AG04450 (cell line): ENCODE measurements at regions of chr11 and their contacts with region 1.

Region 1: DNA sequence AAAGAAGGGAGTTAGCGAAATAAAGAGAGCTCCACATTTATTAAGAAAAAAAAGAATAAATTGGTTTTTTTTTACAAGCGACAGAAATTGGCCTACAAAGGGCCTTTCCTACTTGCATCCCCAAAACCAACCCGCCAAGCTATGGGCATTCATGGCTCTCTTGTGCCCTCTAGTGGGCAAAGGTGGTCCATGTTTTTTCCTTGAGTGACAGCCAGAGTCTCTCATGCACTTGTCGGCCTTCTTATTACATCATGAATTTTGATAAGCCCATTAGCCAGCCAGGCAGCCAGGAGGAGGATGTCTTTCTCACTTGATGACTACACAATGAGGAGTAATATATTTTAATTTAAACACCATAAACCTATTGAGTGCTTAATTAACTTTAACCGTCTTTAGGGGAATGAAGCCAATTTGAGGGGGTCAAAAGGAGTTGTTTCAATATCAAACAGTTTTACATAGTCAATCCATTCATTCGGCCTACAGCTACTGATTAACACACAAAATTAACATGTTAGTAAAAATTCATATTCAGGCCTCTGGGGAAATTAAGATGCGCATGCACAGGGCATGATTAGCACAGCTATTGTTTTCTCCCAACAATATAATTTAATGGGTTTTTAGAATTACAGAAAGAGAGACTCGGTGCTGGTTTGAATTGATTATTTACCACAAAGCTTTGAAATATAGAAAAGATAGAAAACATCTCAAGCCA is 85.5 kb downstream of the RCN1 start:
- DNase-seq: peak; percentile 48
- H3K4me3 ChIP-seq: no peak overlapping the region
- H3K27ac ChIP-seq: no peak overlapping the region
- H3K27me3 ChIP-seq: peaks cover 9% of the 10 kb centered on the region
- CTCF ChIP-seq: peak; percentile 94

Region 2: DNA sequence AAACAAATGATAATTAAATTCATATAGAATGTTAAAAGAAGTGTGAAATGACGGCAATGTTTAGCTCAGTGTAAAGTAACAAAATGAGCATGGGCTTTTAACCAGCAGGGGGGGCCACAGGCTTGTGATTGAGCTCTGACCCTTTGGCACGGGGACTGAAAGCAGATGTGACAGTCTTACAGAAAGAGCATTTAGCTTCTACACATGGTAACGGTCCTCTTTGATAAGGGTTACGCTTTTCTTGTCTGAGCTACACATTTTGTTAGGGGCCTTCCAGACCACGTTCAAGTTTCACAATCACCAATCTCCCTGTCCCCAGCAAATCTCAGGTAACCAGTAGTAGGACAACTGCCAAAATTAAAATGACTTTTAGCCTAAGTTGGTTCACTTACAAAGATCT is 1069.3 kb before region 1 on chr11:
- CTCF ChIA-PET with region 1: interaction called, 16 read pairs
- POLR2A ChIA-PET with region 1: no interaction called
- DNase-seq: no peak
- H3K4me3 ChIP-seq: no peak overlapping the region
- H3K27ac ChIP-seq: no peak overlapping the region
- H3K27me3 ChIP-seq: no peaks in the 10 kb centered on the region
- CTCF ChIP-seq: peak; percentile 46

Region 3: GRCh38 chr11:31397239-31397834 is 779.0 kb before region 1 on chr11:
- CTCF ChIA-PET with region 1: interaction called, 12 read pairs
- POLR2A ChIA-PET with region 1: no interaction called
- DNase-seq: no peak
- H3K4me3 ChIP-seq: no peak overlapping the region
- H3K27ac ChIP-seq: no peak overlapping the region
- H3K27me3 ChIP-seq: no peaks in the 10 kb centered on the region
- CTCF ChIP-seq: peak; percentile 67

Region 4: DNA sequence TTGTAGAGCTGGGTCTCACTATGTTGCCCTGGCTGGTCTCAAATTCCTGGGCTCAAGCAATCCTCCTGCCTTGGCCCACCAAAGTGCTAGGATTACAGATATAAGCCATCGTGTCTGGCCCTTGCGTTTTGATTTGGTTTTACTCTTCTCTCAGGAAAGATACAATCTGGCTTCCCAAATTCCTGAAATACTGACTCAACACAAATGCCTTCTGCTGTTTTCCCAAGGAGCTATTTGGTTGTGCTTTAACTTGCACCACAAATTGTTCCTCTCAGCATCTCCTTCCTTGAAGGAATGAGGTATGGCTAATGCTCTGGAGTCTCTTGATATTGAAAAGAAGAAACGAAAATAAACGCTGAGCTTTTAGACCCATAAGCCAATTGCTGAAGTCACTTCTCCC is 255.3 kb before region 1 on chr11:
- CTCF ChIA-PET with region 1: no interaction called
- POLR2A ChIA-PET with region 1: no interaction called
- DNase-seq: no peak
- H3K4me3 ChIP-seq: no peak overlapping the region
- H3K27ac ChIP-seq: no peak overlapping the region
- H3K27me3 ChIP-seq: peaks cover 2% of the 10 kb centered on the region
- CTCF ChIP-seq: no peak

Region 5: GRCh38 chr11:32006799-32007388 is 169.5 kb before region 1 on chr11:
- CTCF ChIA-PET with region 1: interaction called, 27 read pairs
- POLR2A ChIA-PET with region 1: no interaction called
- DNase-seq: peak; percentile 6
- H3K4me3 ChIP-seq: no peak overlapping the region
- H3K27ac ChIP-seq: no peak overlapping the region
- H3K27me3 ChIP-seq: peaks cover 19% of the 10 kb centered on the region
- CTCF ChIP-seq: peak; percentile 73

Region 6: DNA sequence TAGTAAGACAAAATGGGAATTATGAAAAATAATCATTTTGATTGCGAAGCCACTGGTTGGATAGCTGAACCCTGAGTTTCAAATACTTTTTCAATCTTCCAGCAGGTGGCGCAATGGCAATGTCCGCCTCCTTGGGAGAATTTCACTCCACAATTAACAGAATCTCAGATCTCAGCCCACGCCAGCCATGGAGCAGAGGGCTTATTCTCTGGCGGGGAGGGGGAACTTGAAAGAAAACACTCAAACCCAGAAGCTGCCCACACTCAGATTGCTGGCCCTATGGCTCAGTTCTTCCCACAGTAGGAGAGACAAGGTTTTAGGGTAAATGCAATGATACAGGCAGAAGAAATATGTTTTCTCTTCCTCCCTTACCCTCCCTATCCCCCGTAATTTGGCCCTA is 124.2 kb before region 1 on chr11:
- CTCF ChIA-PET with region 1: interaction called, 269 read pairs
- POLR2A ChIA-PET with region 1: no interaction called
- DNase-seq: peak; percentile 15
- H3K4me3 ChIP-seq: no peak overlapping the region
- H3K27ac ChIP-seq: no peak overlapping the region
- H3K27me3 ChIP-seq: peaks cover 27% of the 10 kb centered on the region
- CTCF ChIP-seq: peak; percentile 73

Region 7: DNA sequence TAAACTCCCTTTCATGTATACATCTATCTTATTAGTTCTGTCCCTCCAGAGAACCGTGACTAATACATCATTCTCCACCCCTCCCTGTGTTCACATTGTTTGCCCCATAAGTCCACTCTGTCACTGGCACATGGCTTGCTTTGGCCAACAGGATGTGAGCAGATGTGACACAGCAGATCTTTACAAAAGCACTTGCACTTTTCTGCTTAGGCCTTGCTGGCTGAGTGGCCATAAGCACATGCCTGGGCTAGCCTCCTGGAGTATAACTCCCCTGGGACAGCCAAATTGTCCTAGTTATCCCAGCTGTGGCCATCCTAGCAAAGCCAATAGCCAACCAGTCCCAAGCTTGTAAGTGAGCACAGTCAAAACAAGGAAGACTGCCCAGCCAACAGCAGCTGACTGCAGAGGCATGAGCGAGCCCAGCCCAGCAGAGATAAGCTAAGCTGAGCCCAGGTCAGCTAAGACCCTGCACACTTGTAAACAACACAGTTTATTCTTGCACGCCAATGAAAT is 95.2 kb before region 1 on chr11:
- CTCF ChIA-PET with region 1: interaction called, 10 read pairs
- POLR2A ChIA-PET with region 1: no interaction called
- DNase-seq: no peak
- H3K4me3 ChIP-seq: no peak overlapping the region
- H3K27ac ChIP-seq: no peak overlapping the region
- H3K27me3 ChIP-seq: no peaks in the 10 kb centered on the region
- CTCF ChIP-seq: no peak

Region 8: DNA sequence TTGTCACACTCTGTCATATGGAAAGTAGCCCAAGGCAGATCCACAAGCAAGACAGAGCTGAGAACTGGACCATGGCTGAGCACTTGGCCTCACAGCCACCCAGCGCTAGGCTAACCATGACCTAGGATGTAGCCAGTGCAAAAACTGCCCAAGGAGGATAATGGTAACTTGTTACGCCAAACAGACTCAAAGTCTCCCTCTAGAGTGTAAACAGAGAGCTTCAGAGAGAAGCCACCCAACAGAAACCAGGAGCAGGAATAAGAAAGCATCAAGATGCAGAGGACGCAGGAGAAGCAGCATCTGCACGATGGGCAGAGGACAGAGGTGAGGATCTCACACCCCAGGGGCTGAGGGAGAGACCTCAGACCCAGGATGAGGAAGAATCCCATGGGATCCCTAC is 12.4 kb after region 1 on chr11:
- CTCF ChIA-PET with region 1: interaction called, 12 read pairs
- POLR2A ChIA-PET with region 1: no interaction called
- DNase-seq: no peak
- H3K4me3 ChIP-seq: no peak overlapping the region
- H3K27ac ChIP-seq: no peak overlapping the region
- H3K27me3 ChIP-seq: peaks cover 16% of the 10 kb centered on the region
- CTCF ChIP-seq: no peak